ENCODE measurements at regions of chr19 and their contacts with region 1.

Region 1: GRCh38 chr19:984165-984967 is at the start of gene WDR18:
- DNase-seq: peak; percentile 93 to 98 (median 95)
- H3K4me3 ChIP-seq: peak within 1 kb of the TSS; percentile 61 to 79 (median 78)
- H3K27ac ChIP-seq: peak within 1 kb of the TSS; percentile 78 to 93
- H3K4me1 ChIP-seq: peaks cover 0 to 18% (median 16%) of the 10 kb centered on the region in 3 donors
- H3K27me3 ChIP-seq: no peaks in the 10 kb centered on the region
- CTCF ChIP-seq: peak; percentile 13
- total RNA-seq, gene WDR18: 40.3 TPM

Region 2: DNA sequence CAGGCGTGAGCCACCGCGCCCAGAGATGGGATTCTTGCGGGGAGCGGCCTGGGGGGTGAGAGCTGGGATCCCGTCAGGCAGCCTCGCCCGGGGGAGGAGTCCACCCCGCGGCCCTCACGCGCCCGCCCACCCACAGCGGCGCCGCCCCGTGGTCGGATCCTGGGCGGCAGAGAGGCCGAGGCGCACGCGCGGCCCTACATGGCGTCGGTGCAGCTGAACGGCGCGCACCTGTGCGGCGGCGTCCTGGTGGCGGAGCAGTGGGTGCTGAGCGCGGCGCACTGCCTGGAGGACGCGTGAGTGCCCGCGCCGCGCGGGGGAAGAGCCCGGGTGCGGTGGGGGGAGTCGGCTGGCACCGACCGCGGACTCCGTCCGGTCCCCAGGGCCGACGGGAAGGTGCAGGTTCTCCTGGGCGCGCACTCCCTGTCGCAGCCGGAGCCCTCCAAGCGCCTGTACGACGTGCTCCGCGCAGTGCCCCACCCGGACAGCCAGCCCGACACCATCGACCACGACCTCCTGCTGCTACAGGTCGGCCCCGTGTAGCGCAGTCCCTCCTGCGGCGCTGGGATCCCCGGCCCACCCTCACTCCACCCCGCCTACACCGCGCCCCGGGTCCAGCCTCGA is 123.8 kb before region 1 on chr19:
- intact Hi-C with region 1: no loop called
- DNase-seq: peak; percentile 61 to 93 (median 85)
- H3K4me3 ChIP-seq: no peak overlapping the region
- H3K27ac ChIP-seq: no peak overlapping the region
- H3K4me1 ChIP-seq: peaks cover 0 to 10% (median 0%) of the 10 kb centered on the region in 3 donors
- H3K27me3 ChIP-seq: no peaks in the 10 kb centered on the region
- CTCF ChIP-seq: peak; percentile 11

Region 3: GRCh38 chr19:925526-926322 is 58.6 kb before region 1 on chr19 and contains the start of gene ARID3A:
- intact Hi-C with region 1: loop called (anchors 5 kb)
- DNase-seq: peak; percentile 90 to 95 (median 93)
- H3K4me3 ChIP-seq: peak within 1 kb of the TSS; percentile 41 to 78 (median 69)
- H3K27ac ChIP-seq: peak within 1 kb of the TSS; percentile 74 to 84
- H3K4me1 ChIP-seq: peaks cover 0 to 5% (median 0%) of the 10 kb centered on the region in 3 donors
- H3K27me3 ChIP-seq: peaks cover 2% of the 10 kb centered on the region
- CTCF ChIP-seq: peak; percentile 16
- total RNA-seq, gene ARID3A: 16.9 TPM